ENCODE measurements at regions of chr17 and their contacts with region 1.

Region 1: GRCh38 chr17:35612924-35613521 is 25.9 kb downstream of the AP2B1 start:
- DNase-seq: peak in 1 of 2 experiments; percentile 79

Region 2: DNA sequence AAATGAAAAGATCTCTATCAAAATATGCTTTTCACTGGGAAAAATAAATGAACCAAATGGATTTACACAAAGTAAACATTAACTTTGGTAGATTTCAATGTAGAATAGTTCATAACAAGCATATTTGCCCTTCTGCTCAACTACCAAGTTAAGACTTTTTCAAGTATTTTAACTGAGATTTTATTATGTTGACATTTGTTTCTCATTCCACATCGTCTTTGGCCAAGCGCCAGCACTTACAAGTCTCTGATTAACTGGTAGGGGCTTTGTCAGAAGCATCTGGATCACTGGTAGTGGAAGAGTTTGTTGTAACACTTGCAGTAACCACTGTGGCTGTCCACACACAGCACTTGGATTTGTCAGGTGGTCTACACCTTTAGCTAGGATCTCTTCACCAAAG is 98.5 kb before region 1 on chr17:
- in situ Hi-C with region 1: no loop called
- DNase-seq: no peak

Region 3: DNA sequence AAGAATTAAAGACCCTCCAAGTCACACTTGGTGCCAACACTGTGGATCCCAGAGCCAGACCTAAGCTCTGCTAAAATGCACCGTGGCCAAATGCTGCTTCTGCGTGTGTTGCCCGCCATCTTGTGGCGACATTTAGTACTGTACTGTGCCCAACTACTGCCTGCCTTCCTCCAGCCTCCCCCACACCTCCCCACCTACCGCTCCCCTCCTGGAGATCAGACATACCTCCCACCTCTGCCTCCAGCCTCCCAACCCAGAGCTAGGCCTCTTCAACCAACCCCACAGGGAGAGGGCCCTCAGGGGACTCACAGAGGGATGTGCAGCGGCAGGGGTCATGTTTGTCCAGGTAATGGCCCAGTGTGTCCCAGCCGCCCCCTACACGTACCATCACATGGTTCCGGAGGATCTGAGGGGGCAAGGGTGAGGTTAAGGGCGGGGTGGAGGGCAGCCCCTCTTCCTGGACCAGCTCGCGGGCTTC is 134.6 kb after region 1 on chr17:
- in situ Hi-C with region 1: loop called (anchors 25 kb)
- DNase-seq: peak; percentile 87 to 93